Body of pancreas (tissue), 4 donors: ENCODE measurements at regions of chr14 and their contacts with region 1.

Region 1: GRCh38 chr14:68843471-68844209 is 50.8 kb upstream of the ZFP36L1 start:
- DNase-seq: peak; percentile 79 to 86 (median 82)
- ATAC-seq: peak; percentile 92
- H3K4me3 ChIP-seq: no peak overlapping the region
- H3K27ac ChIP-seq: no peak overlapping the region
- H3K4me1 ChIP-seq: peaks cover 18% of the 10 kb centered on the region
- H3K27me3 ChIP-seq: no peaks in the 10 kb centered on the region
- CTCF ChIP-seq: peak; percentile 83 to 96 (median 88)
- POLR2A ChIP-seq: no peak

Region 2: DNA sequence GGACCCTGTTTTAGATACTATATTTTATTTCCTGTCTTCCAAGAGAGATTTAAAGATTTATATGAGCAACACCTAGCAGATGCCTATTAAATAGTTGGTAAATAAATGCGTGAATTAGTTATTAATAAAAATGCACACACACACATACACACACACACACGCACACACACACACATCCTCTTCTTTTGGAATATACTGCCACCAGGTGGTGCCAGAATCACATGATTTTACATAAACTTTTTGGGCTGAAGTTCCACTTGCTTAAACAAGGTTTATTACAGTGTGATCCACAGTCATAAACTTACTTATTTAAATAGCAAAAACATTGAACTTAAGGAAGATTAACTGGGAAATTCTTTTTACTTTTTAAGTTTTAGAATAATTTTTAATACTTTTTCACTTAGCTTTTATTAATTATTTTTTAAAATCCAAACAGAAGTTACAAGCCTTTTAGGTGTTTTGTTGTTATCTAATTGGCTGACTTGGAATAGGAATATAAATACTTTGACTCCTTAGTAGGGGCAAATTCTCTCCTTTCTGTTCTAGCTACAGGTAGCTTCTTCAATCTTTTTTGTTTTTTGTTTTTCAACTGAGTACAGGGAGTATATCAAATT is 1006.5 kb before region 1 on chr14:
- intact Hi-C with region 1: loop called (anchors 10 kb)
- DNase-seq: peak; percentile 62 to 75 (median 70)
- ATAC-seq: peak; percentile 66
- H3K4me3 ChIP-seq: no peak overlapping the region
- H3K27ac ChIP-seq: no peak overlapping the region
- H3K4me1 ChIP-seq: no peaks in the 10 kb centered on the region
- H3K27me3 ChIP-seq: no peaks in the 10 kb centered on the region
- CTCF ChIP-seq: peak; percentile 34 to 91 (median 75)
- POLR2A ChIP-seq: no peak

Region 3: DNA sequence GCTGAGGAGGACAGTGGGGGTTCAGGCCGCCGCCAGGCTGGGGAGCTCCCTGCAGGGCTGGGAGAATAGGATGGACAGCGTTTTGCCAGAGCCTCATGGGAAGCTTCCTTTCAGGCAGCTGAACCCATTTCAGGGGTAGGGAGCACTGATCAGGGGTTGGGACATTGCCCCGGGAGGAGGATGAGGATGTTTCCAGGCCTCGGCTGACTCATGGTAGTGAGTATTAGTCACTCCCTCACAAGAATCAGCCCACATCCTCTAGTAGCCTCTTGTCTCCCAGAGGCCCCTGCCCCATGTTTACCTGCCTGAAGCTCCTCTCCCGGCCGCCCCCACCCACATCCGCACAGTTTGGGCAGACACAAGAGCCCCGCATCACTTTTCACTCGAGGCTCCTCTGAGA is 140.5 kb before region 1 on chr14:
- intact Hi-C with region 1: no loop called
- DNase-seq: peak in 1 of 4 donors; percentile 50
- ATAC-seq: no peak
- H3K4me3 ChIP-seq: no peak overlapping the region
- H3K27ac ChIP-seq: no peak overlapping the region
- H3K4me1 ChIP-seq: peaks cover 3% of the 10 kb centered on the region
- H3K27me3 ChIP-seq: no peaks in the 10 kb centered on the region
- CTCF ChIP-seq: no peak
- POLR2A ChIP-seq: no peak